Heart right ventricle (tissue), 16 donors: ENCODE measurements at regions of chr5 and their contacts with region 1.

Region 1: GRCh38 chr5:81773574-81773973 is 22.7 kb upstream of the SSBP2 start:
- DNase-seq: no peak
- ATAC-seq: peak in 3 of 8 donors; percentile 28 to 52 (median 34)
- H3K4me3 ChIP-seq: no peak overlapping the region
- H3K27ac ChIP-seq: peak overlapping the region in 6 of 10 donors; percentile 1 to 48 (median 30)
- H3K4me1 ChIP-seq: peaks cover 0 to 29% (median 9%) of the 10 kb centered on the region in 9 donors
- H3K27me3 ChIP-seq: no peaks in the 10 kb centered on the region
- CTCF ChIP-seq: no peak

Region 2: GRCh38 chr5:81761270-81761669 is 12.3 kb before region 1 on chr5:
- intact Hi-C with region 1: loop called in 1 of 10 experiments (anchors 1 kb)
- DNase-seq: no peak
- ATAC-seq: peak in 4 of 8 donors; percentile 13 to 44 (median 27)
- H3K4me3 ChIP-seq: no peak overlapping the region
- H3K27ac ChIP-seq: peak overlapping the region in 1 of 10 donors; percentile 45
- H3K4me1 ChIP-seq: peaks cover 0 to 17% (median 3%) of the 10 kb centered on the region in 9 donors
- H3K27me3 ChIP-seq: no peaks in the 10 kb centered on the region
- CTCF ChIP-seq: no peak